SK-N-SH (cell line): ENCODE measurements at regions of chr1 and their contacts with region 1.

Region 1: GRCh38 chr1:39098546-39099250 is 72.5 kb downstream of the NDUFS5 start:
- DNase-seq: peak; percentile 89
- H3K4me3 ChIP-seq: peak overlapping the region in 1 of 2 experiments; percentile 30; a peak in 1 of 4 replicates
- H3K27ac ChIP-seq: peak overlapping the region in 1 of 2 experiments; percentile 60; a peak in 2 of 4 replicates
- H3K4me1 ChIP-seq: peaks cover 9 to 17% of the 10 kb centered on the region in 2 experiments
- H3K27me3 ChIP-seq: no peaks in the 10 kb centered on the region
- CTCF ChIP-seq: peak; percentile 79
- EP300 ChIP-seq: 0 out of 4 replicates have a peak, but pooled peaks of 1 of the 2 experiments have one; percentile 8
- RAD21 ChIP-seq: peak; percentile 93

Region 2: DNA sequence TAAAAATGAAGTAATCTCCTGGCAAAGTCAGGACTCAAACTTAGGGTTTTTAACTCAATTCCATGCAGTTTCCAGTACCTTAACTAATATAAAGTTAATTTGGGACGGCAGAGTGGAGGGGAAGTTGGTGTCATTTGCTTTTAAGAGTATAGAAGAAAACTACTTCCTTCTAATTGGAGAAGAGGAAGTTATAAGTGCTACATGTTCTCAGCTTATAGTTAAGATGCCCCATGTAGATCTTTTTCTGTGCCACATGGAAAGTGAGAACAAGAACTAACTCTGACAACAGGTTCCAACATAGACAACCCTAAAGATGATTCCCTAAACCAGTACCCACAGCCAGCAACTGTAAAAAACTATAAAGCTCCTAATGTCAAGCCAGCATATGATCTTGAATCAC is 250.6 kb before region 1 on chr1:
- CTCF ChIA-PET with region 1: no interaction called
- POLR2A ChIA-PET with region 1: no interaction called
- DNase-seq: no peak
- H3K4me3 ChIP-seq: no peak overlapping the region
- H3K27ac ChIP-seq: no peak overlapping the region
- H3K4me1 ChIP-seq: no peaks in the 10 kb centered on the region
- H3K27me3 ChIP-seq: no peaks in the 10 kb centered on the region
- CTCF ChIP-seq: no peak
- EP300 ChIP-seq: no peak
- RAD21 ChIP-seq: no peak

Region 3: GRCh38 chr1:39044762-39045161 is 53.9 kb before region 1 on chr1:
- CTCF ChIA-PET with region 1: no interaction called
- POLR2A ChIA-PET with region 1: no interaction called
- DNase-seq: no peak
- H3K4me3 ChIP-seq: no peak overlapping the region
- H3K27ac ChIP-seq: no peak overlapping the region
- H3K4me1 ChIP-seq: 0 out of 4 replicates have a peak, but pooled peaks cover 0 to 11% of the 10 kb centered on the region in 2 experiments
- H3K27me3 ChIP-seq: no peaks in the 10 kb centered on the region
- CTCF ChIP-seq: no peak
- EP300 ChIP-seq: no peak
- RAD21 ChIP-seq: no peak

Region 4: DNA sequence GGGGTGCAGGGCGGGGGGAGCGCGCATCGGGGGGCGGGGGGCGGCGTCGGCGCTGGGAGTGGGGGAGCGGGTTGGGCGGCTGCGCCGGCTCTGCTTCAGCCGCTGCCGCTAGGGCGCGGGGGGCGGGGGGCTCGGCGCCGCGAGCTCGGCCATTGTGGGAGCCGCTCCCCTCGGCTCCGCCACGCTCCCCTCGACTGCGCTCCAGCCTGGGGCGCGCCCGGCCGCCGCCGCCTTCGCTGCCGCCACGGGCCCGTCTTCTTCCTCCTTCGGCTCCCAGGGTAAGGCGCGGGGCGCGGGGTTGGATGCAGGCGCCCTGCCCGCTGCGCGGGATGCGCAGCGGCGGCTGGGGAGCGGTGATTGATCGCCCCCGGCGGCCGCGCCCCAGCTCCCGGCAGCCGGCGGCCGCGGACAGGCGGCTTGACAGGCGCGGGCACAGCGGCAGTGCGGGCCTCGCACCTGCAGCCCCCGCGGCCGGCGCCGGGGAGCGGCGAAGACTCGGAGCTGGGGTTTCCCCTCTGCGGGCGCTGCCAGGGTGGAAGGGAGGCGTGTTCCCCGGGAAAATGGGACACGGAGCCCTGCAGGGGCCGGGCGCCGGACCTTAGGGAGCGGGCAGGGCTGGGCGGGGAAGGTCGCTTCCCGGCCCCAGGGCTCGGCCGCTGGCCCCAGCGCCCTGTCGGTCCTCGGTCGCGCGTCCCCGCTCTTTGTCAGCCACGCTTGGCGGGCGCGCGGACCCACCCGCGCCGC is 17.3 kb before region 1 on chr1:
- CTCF ChIA-PET with region 1: interaction called, 12 read pairs
- POLR2A ChIA-PET with region 1: no interaction called
- DNase-seq: peak; percentile 89
- H3K4me3 ChIP-seq: peak overlapping the region; percentile 60 to 63
- H3K27ac ChIP-seq: no peak overlapping the region
- H3K4me1 ChIP-seq: peaks cover 0 to 6% of the 10 kb centered on the region in 2 experiments; a peak in 1 of 4 replicates
- H3K27me3 ChIP-seq: peaks cover 8% of the 10 kb centered on the region; the same call in 1 of the 2 replicates
- CTCF ChIP-seq: 0 out of 2 replicates have a peak, but pooled peaks have one; percentile 9
- EP300 ChIP-seq: no peak
- RAD21 ChIP-seq: no peak

Region 5: DNA sequence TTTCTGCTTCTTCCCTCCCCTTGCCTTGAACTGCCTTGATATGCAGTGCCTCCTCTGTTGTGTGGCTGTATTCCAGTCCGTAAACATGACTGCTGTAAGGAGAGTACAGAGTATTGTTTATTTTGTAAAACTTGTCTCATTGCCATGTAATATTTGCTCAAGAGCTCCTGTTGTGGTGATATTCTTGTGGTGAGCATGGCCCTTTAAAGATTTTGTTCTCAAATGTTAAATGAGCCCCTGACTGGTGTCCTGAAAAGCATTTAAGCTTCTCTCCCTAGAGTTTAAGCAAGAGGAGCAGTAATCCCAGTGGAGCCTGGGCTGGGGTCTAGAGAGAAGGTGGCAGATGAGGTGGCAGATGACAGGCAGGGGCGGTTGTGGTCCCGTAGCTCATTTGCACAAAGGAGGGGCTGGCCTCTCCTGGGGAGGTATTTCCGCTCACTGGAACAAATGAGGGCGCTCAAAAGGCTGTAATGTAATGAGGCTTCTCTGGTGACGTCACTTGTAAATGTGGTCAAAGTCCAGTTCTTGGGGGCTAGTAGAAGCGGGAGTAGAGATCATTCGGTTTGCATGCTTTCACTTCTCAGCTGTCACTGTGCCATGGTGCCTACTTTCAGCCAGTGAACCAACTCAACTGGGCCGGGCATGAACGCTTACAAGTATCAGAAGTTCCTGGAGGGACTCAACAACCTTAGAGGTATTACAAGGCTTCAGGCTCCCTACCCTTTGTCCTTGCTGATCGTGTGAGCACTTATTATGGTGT is 59.8 kb after region 1 on chr1:
- CTCF ChIA-PET with region 1: interaction called, 12 read pairs
- POLR2A ChIA-PET with region 1: no interaction called
- DNase-seq: no peak
- H3K4me3 ChIP-seq: no peak overlapping the region
- H3K27ac ChIP-seq: peak overlapping the region in 1 of 2 experiments; percentile 77; a peak in 2 of 4 replicates
- H3K4me1 ChIP-seq: peaks cover 9 to 52% of the 10 kb centered on the region in 2 experiments; a peak in 3 of 4 replicates
- H3K27me3 ChIP-seq: no peaks in the 10 kb centered on the region
- CTCF ChIP-seq: no peak
- EP300 ChIP-seq: no peak
- RAD21 ChIP-seq: no peak

Region 6: GRCh38 chr1:39258146-39258924 is 159.6 kb after region 1 on chr1:
- CTCF ChIA-PET with region 1: interaction called, 89 read pairs
- POLR2A ChIA-PET with region 1: no interaction called
- DNase-seq: peak; percentile 80
- H3K4me3 ChIP-seq: no peak overlapping the region; a peak in 1 of 4 replicates
- H3K27ac ChIP-seq: peak overlapping the region; percentile 5 to 48; a peak in 1 of 4 replicates
- H3K4me1 ChIP-seq: peaks cover 10 to 11% of the 10 kb centered on the region in 2 experiments
- H3K27me3 ChIP-seq: no peaks in the 10 kb centered on the region
- CTCF ChIP-seq: peak; percentile 86
- EP300 ChIP-seq: no peak
- RAD21 ChIP-seq: peak; percentile 89

Region 7: DNA sequence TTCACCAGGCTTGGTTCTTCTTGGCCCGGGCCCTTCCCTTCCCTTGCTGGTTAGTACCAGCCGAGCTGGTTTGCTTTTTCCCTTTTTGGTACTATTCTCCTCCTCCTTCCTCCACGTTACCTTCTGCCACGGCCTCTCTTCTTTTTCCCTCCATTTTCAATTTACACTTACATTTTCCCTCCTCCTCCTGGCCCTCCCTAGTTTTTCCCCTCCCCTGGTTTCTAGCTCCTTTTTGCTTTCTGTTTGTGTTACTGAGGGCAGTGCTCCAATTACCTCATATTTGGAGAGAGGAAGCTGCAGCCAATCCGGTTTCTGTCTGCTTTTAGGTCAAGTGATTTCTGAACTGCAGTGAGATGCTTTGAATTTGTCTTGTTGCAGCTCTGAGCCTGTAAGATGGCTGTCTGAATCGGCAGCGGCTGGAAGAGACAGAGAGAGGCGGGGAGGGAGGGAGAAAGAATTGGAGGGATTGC is 169.4 kb after region 1 on chr1:
- CTCF ChIA-PET with region 1: interaction called, 89 read pairs
- POLR2A ChIA-PET with region 1: no interaction called
- DNase-seq: no peak
- H3K4me3 ChIP-seq: no peak overlapping the region
- H3K27ac ChIP-seq: peak overlapping the region in 1 of 2 experiments; percentile 36; a peak in 1 of 4 replicates
- H3K4me1 ChIP-seq: peaks cover 10 to 12% of the 10 kb centered on the region in 2 experiments; a peak in 3 of 4 replicates
- H3K27me3 ChIP-seq: no peaks in the 10 kb centered on the region
- CTCF ChIP-seq: no peak
- EP300 ChIP-seq: no peak
- RAD21 ChIP-seq: no peak

Region 8: GRCh38 chr1:39538588-39539465 is 440.1 kb after region 1 on chr1:
- CTCF ChIA-PET with region 1: interaction called, 33 read pairs
- POLR2A ChIA-PET with region 1: no interaction called
- DNase-seq: peak; percentile 85
- H3K4me3 ChIP-seq: no peak overlapping the region; a peak in 1 of 4 replicates
- H3K27ac ChIP-seq: no peak overlapping the region
- H3K4me1 ChIP-seq: no peaks in the 10 kb centered on the region; a peak in 1 of 4 replicates
- H3K27me3 ChIP-seq: no peaks in the 10 kb centered on the region
- CTCF ChIP-seq: peak; percentile 95
- EP300 ChIP-seq: no peak
- RAD21 ChIP-seq: peak; percentile 90